Activated CD4-positive, alpha-beta T cell treated with anti-CD3 and anti-CD28 coated beads, Interleukin-2, amount 10 ng/mL, durations not matched to agents 24 days and 14 days (primary cell): ENCODE measurements at regions of chr12 and their contacts with region 1.

Region 1: DNA sequence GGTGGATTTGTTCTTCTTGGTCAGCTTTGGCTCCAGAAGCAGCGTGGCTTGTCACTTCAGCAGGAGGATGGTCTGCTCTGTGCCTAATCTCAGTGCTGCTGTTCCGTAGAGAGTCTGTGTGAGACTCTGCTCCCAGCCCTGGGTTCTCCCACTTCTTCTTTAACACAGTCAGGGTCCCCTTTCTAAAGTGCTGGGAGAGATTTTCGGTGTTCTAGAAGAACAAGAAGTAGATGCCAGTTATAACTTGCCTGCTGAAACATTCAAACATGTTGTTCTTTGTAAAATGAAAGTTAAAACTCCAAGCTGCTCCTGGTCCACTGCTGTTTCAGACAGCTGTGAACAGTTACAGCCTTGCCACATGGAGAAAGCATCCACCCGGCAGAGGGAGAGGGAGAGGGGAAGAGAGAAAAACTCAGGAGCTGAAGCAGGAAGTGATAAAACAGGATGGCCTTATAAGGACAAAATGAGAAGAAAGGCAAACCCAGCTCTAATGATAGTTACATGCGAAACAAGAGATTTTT is 55.2 kb upstream of the CERS5 start:
- DNase-seq: peak; percentile 79
- H3K4me3 Mint-ChIP-seq: no peak overlapping the region
- H3K27ac Mint-ChIP-seq: no peak overlapping the region
- H3K4me1 Mint-ChIP-seq: peaks cover 21% of the 10 kb centered on the region
- H3K27me3 Mint-ChIP-seq: no peaks in the 10 kb centered on the region

Region 2: DNA sequence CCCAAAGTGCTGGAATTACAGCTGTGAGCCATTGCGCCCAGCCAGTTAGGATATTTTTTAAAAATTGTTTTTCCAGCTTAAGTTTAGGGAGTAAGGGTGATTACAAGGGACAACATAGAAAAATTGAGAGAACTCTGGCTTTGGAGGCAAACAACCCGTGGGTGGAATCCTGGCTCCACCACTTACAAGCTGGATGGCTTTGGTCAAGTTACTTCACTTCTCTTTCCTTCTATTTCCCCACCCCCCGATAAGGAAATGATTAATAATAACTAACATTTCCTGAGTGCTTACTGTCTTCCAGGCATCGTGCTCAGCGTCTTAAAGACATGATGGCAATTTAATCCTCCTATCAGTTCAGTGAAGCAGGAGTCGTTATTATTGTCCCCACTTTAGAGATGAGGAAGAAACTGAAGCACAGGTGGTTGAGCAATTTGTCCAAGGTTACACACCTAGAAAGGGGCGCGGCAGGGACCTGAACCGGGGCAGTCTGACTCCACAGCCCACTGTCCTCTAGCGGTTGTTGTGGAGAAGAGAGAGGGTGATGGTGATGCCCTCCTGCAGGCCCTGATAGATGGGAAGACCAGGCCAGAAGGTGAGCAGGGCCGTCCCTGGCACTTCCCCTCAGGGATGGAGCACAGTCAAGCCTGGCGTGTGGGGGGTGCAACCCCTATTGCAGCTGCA is 302.0 kb before region 1 on chr12:
- intact Hi-C with region 1: no loop called
- DNase-seq: no peak
- H3K4me3 Mint-ChIP-seq: no peak overlapping the region
- H3K27ac Mint-ChIP-seq: no peak overlapping the region
- H3K4me1 Mint-ChIP-seq: no peaks in the 10 kb centered on the region
- H3K27me3 Mint-ChIP-seq: peaks cover 7% of the 10 kb centered on the region

Region 3: GRCh38 chr12:50111693-50112455 is 110.5 kb before region 1 on chr12 and contains the start of gene COX14:
- intact Hi-C with region 1: loop called (anchors 2 kb)
- DNase-seq: peak; percentile 100
- H3K4me3 Mint-ChIP-seq: peak within 1 kb of the TSS; percentile 95
- H3K27ac Mint-ChIP-seq: peak within 1 kb of the TSS; percentile 96
- H3K4me1 Mint-ChIP-seq: peaks cover 32% of the 10 kb centered on the region
- H3K27me3 Mint-ChIP-seq: no peaks in the 10 kb centered on the region
- total RNA-seq, gene COX14: 44.0 and 45.0 TPM in 2 replicates

Region 4: GRCh38 chr12:50187084-50187900 is 35.0 kb before region 1 on chr12:
- intact Hi-C with region 1: loop called (anchors 1 kb)
- DNase-seq: peak; percentile 74
- H3K4me3 Mint-ChIP-seq: peak overlapping the region; percentile 72
- H3K27ac Mint-ChIP-seq: peak overlapping the region; percentile 95
- H3K4me1 Mint-ChIP-seq: peaks cover 54% of the 10 kb centered on the region
- H3K27me3 Mint-ChIP-seq: no peaks in the 10 kb centered on the region

Region 5: DNA sequence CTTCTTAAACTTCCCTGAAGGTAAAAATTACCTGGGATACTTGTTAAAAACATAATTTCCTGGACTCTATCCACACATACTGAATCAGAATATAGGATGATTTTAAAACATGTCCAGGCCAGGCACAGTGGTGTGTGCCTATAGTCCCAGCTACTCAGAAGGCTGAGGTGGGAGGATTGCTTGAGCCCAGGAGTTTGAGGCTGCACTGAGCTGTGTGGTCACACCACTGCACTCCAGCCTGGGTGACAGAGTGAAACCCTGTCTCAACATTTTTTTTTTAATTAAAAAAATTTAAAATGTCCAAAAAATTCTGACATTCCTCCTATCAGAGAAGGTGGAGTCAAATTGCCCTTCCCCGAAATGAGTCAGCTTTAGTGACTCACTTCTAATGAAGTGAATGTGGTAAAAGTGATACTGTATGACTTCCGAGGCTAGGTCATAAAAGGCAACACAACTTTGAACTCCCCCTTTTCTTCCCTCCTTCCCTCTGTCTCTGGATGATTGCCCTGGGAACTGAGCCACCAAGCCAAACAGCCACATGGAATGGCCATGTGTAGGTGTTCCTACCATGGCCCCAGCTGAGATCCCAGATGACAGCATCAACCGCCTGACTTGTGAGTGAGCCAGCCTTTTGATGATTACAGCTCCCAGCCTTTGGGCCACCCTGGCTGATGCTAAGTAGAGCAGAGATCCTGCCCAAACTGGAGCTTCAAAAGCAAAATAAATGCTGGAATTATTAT is 24.7 kb after region 1 on chr12:
- intact Hi-C with region 1: loop called (anchors 1 kb)
- DNase-seq: peak; percentile 73
- H3K4me3 Mint-ChIP-seq: peak overlapping the region; percentile 66
- H3K27ac Mint-ChIP-seq: peak overlapping the region; percentile 86
- H3K4me1 Mint-ChIP-seq: peaks cover 34% of the 10 kb centered on the region
- H3K27me3 Mint-ChIP-seq: no peaks in the 10 kb centered on the region